Activated CD8-positive, alpha-beta T cell treated with anti-CD3 and anti-CD28 coated beads for 36 hours (primary cell): ENCODE measurements at regions of chr22 and their contacts with region 1.

Region 1: GRCh38 chr22:17785185-17786184 is 11.2 kb upstream of the BID start:
- DNase-seq: peak; percentile 81
- ATAC-seq: peak; percentile 50
- H3K4me3 Mint-ChIP-seq: no peak overlapping the region
- H3K27ac Mint-ChIP-seq: no peak overlapping the region
- H3K4me1 Mint-ChIP-seq: peaks cover 21% of the 10 kb centered on the region
- H3K27me3 Mint-ChIP-seq: no peaks in the 10 kb centered on the region
- CTCF ChIP-seq: peak; percentile 77

Region 2: GRCh38 chr22:17647991-17648390 is 137.5 kb before region 1 on chr22:
- CTCF ChIA-PET with region 1: no interaction called
- POLR2A ChIA-PET with region 1: no interaction called
- intact Hi-C with region 1: no loop called
- DNase-seq: no peak
- ATAC-seq: no peak
- H3K4me3 Mint-ChIP-seq: no peak overlapping the region
- H3K27ac Mint-ChIP-seq: no peak overlapping the region
- H3K4me1 Mint-ChIP-seq: peaks cover 4% of the 10 kb centered on the region
- H3K27me3 Mint-ChIP-seq: no peaks in the 10 kb centered on the region
- CTCF ChIP-seq: no peak

Region 3: DNA sequence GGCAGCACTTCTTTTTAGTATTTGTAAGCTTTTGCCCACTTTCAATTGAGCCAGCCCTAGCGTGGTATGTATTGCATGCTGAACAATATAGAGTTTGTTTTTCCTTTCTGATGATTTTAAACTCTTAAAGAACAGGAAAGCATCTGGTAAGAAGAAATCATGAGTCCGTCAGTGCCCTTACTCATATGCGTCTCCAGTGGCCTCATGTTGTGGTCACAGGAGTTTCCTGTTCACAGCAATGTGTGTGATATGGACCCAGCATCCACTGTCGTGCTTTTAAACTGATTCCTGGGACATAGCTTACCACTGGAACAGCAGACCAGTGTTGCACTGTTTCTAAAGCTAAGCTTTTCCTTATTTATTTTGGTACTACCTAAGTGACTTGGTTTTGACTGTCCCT is 51.3 kb before region 1 on chr22:
- CTCF ChIA-PET with region 1: interaction called, 137 read pairs
- POLR2A ChIA-PET with region 1: no interaction called
- intact Hi-C with region 1: no loop called
- DNase-seq: peak; percentile 71
- ATAC-seq: peak; percentile 85
- H3K4me3 Mint-ChIP-seq: no peak overlapping the region
- H3K27ac Mint-ChIP-seq: peak overlapping the region; percentile 59
- H3K4me1 Mint-ChIP-seq: peaks cover 15% of the 10 kb centered on the region
- H3K27me3 Mint-ChIP-seq: no peaks in the 10 kb centered on the region
- CTCF ChIP-seq: no peak

Region 4: DNA sequence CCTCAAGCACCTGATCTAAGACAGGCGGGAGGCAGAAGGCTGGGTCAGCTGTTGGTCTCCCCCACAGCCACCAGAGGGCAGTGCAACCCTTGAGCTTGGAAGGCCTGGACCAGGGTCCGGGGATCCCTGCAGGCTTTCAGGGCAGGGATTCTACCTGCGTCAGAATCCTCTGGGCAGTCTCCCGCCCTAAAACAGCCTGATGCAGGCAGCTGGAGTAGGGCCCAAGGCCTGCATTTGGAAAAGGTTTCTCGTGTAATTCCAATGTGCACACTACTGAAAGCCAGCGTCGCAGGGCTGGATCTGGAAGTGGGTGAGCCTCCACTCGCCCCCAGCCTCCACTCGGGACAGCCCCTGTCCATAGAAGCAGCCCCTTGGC is 43.0 kb before region 1 on chr22:
- CTCF ChIA-PET with region 1: interaction called, 137 read pairs
- POLR2A ChIA-PET with region 1: interaction called, 3 read pairs
- intact Hi-C with region 1: loop called (anchors 5 kb)
- DNase-seq: peak; percentile 80
- ATAC-seq: peak; percentile 97
- H3K4me3 Mint-ChIP-seq: no peak overlapping the region
- H3K27ac Mint-ChIP-seq: no peak overlapping the region
- H3K4me1 Mint-ChIP-seq: peaks cover 5% of the 10 kb centered on the region
- H3K27me3 Mint-ChIP-seq: no peaks in the 10 kb centered on the region
- CTCF ChIP-seq: peak; percentile 91

Region 5: DNA sequence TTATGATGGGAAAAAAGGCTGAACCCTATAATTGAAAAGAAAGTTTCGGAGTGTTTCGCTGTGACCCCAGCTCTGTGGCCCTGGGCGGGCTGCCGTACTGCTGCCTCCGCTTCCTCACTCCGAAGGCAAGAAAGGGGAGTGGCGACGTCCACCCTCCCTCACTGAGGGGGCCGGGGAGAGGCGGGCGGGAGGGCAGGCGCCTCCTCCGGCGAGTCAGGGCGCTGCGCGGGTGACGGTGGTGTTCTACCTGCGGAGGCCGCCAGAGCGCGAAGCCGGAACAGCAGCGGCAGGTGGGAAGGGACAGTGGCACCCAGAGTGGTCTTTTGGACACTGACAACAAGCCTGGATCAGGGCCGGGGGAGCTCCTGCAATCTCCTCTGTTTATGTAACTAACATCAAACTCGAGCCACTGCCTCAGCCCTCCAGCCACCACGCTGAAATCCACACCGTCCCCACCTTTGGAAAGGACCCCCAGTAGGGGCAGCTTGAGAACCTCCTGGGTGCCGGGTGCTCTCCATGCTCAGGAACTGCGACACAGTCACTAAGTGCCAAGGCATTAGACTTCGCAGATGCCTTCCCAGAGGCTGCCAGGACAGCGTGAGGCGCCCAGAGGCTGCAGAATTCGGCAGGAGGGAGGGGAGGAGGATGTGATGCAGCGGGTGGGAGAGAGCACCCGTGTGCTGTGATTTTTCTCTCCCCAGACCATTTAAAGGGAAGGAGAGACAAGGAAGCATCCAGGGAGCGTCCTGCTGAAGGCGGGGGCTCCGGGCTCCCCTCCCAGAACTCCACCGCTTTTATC is 36.7 kb before region 1 on chr22:
- CTCF ChIA-PET with region 1: interaction called, 137 read pairs
- POLR2A ChIA-PET with region 1: no interaction called
- intact Hi-C with region 1: loop called (anchors 5 kb)
- DNase-seq: no peak
- ATAC-seq: no peak
- H3K4me3 Mint-ChIP-seq: no peak overlapping the region
- H3K27ac Mint-ChIP-seq: no peak overlapping the region
- H3K4me1 Mint-ChIP-seq: no peaks in the 10 kb centered on the region
- H3K27me3 Mint-ChIP-seq: no peaks in the 10 kb centered on the region
- CTCF ChIP-seq: no peak

Region 6: DNA sequence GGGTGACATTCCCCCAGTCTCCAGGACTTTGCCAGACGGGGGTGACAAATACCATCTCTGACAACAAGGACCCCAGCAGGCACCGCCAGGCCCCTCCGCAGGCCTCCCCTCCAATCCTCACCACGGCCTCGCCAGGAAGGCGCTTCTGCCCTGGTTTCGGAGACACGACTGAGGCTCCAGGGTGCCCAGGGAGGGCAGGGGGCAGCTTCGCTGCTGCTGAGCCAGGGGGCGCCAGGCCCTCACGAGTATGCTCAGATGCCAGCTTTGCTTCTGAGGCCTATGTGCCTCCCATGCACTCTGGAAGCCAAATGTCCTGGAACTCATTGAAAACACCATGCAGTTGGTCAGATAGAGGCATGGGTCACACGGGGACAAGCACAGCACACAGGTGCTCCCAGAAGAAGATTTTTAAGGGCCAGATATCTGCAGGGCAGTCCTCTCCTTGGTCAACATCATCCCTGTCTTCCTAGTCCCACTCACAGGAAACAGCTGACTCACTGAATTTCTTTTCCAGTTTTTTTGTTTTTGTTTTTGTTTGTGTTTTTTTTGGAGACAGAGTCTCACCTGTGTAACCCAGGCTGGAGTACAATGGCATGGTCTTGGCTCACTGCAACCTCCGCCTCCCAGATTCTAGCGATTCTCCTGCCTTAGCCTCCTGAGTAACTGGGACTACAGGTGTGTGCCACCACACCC is 31.1 kb before region 1 on chr22:
- CTCF ChIA-PET with region 1: interaction called, 17 read pairs
- POLR2A ChIA-PET with region 1: interaction called, 3 read pairs
- intact Hi-C with region 1: loop called (anchors 5 kb)
- DNase-seq: peak; percentile 63
- ATAC-seq: peak; percentile 76
- H3K4me3 Mint-ChIP-seq: no peak overlapping the region
- H3K27ac Mint-ChIP-seq: no peak overlapping the region
- H3K4me1 Mint-ChIP-seq: peaks cover 4% of the 10 kb centered on the region
- H3K27me3 Mint-ChIP-seq: no peaks in the 10 kb centered on the region
- CTCF ChIP-seq: peak; percentile 61

Region 7: DNA sequence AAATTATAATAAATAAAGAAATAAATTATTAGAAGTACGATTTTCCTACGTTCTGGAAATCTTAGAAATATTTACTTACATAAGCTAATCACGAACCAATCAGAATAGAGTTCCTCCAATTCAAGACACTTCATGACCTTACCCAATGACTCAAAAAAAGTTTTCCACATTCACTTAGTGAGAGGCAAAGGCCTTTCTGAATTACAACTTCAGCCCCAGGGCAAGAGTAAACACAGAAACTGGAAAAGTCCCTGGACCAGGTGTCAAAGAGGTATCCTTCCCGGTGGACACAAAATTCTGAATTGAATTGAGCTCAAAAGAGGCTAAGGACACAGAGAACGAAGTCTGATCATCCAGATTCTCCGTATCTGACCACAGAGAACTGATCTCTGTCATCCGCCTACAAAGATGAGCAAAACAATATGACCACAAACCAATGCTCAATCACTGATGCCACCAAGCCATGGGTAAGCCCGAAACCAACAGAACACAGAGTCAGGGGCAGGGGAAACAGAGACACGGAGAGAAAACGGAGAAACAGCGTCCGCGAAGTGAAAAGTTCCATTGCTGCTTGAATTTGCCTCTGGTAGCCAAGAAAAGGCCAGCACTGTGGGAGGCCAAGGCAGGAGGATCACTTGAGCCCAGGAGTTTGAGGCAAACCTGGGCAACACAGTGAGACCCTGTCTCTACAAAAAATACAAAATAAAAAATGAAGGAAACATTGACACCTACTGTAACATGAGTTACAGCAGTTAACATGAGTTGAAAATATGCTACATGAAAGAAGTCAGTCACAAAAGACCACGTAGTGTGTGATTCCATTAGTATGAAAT is 18.0 kb before region 1 on chr22:
- CTCF ChIA-PET with region 1: interaction called, 29 read pairs
- POLR2A ChIA-PET with region 1: interaction called, 11 read pairs
- intact Hi-C with region 1: no loop called
- DNase-seq: peak; percentile 86
- ATAC-seq: peak; percentile 86
- H3K4me3 Mint-ChIP-seq: peak overlapping the region; percentile 49
- H3K27ac Mint-ChIP-seq: peak overlapping the region; percentile 76
- H3K4me1 Mint-ChIP-seq: peaks cover 48% of the 10 kb centered on the region
- H3K27me3 Mint-ChIP-seq: peaks cover 1% of the 10 kb centered on the region
- CTCF ChIP-seq: no peak

Region 8: DNA sequence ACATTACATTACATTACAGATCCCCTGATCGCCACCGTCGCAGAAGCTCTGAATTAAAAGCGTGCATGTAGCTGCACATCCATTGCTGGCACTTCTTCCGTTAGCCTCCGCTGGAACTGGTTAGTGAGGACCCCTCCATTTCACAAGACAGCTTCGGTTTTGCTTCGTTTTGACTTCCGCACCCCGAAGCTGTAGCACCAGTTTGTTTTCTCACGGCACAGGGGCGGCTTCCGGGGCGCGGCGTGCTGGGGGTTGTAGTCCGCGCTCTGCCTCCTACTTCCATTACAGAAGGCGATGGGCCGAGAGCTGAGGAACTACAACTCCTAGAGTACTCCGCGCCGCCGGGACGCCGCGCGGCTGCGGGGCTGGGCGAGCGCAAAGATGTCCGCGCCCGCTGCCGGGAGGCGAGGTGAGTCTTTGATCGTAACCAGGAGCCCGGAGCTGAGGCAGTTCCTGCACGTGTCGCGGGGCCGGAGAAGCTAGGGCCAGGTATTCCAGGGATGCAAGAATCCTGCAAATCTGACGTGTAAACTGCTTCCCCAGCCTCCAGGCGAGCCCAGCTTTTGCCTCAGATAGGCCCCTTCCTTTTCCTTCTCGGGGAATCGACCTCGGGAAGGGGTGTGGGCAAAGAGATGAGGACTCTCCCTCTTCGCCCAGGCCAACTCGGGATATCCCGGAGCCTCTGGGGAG is 292.3 kb after region 1 on chr22 and contains the start of gene PEX26:
- CTCF ChIA-PET with region 1: interaction called, 25 read pairs
- POLR2A ChIA-PET with region 1: interaction called, 8 read pairs
- intact Hi-C with region 1: no loop called
- DNase-seq: peak; percentile 97
- ATAC-seq: peak; percentile 98
- H3K4me3 Mint-ChIP-seq: peak within 1 kb of the TSS; percentile 99
- H3K27ac Mint-ChIP-seq: peak within 1 kb of the TSS; percentile 99
- H3K4me1 Mint-ChIP-seq: peaks cover 51% of the 10 kb centered on the region
- H3K27me3 Mint-ChIP-seq: no peaks in the 10 kb centered on the region
- CTCF ChIP-seq: no peak
- total RNA-seq, gene PEX26: 57.8 to 59.7 TPM